GM10248 (cell line): ENCODE measurements at regions of chr4 and their contacts with region 1.

Region 1: GRCh38 chr4:56435306-56435926 is at the start of gene PPAT:
- DNase-seq: peak; percentile 97
- CTCF ChIP-seq: peak; percentile 9

Region 2: DNA sequence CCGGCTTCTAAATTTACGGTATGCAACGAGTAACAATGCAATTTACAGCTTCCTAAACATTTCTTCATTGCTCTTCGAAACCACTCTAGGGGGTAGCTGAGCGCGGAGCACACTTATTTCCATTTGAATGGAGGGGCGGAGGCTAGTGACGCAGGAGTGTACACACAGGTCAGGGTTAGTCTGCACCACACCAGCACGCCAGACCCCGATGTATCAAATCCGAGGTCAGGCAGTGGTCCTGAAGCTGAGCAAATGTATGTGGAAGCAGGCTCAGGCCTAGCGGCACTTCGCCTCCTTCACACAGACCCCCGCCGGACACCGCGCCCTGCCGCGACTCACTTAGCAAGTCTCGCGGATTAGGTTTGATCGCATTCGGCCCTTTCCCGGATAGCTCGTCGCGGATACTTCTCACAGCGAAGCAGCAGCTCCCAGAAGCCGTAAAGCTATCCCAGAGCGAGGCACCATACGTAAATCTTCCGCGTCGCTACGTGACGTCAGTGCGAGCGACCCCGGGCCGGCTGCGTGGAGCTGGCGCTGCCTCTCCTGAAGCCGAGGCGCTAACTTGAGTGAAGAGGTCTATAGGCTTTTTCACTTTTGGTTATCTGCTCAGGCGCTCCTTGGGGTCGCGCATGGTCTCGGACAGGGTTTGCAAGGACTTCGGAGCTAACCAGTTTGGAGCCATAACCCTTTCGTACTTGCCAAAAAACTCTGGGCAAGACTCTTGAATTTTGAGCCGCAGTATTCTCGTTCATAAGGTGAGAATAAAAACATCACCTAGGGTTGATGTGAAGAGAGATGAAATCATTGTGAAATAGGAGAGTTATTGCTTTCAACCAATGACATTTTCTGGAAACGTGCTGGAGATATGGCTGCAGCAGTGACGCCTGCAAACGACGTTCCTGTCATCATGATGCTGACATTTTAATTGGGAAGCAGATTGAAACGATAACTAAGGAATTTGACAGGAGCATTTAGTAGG is 48.1 kb before region 1 on chr4 and contains the start of gene AASDH:
- CTCF ChIA-PET with region 1: interaction called, 7 read pairs
- POLR2A ChIA-PET with region 1: interaction called, 22 read pairs
- DNase-seq: peak; percentile 91
- CTCF ChIP-seq: no peak

Region 3: GRCh38 chr4:56424697-56425514 is 10.5 kb before region 1 on chr4:
- CTCF ChIA-PET with region 1: interaction called, 64 read pairs
- POLR2A ChIA-PET with region 1: interaction called, 4 read pairs
- DNase-seq: peak; percentile 30
- CTCF ChIP-seq: peak; percentile 52

Region 4: GRCh38 chr4:56460085-56460484 is 24.7 kb after region 1 on chr4:
- CTCF ChIA-PET with region 1: interaction called, 15 read pairs
- POLR2A ChIA-PET with region 1: interaction called, 19 read pairs
- DNase-seq: no peak
- CTCF ChIP-seq: no peak

Region 5: GRCh38 chr4:56467284-56468096 is 32.1 kb after region 1 on chr4 and contains the start of gene SRP72:
- CTCF ChIA-PET with region 1: interaction called, 8 read pairs
- POLR2A ChIA-PET with region 1: interaction called, 19 read pairs
- DNase-seq: peak; percentile 92
- CTCF ChIP-seq: no peak

Region 6: GRCh38 chr4:56977321-56978012 is 542.1 kb after region 1 on chr4 and contains the start of gene NOA1:
- CTCF ChIA-PET with region 1: interaction called, 3 read pairs
- POLR2A ChIA-PET with region 1: interaction called, 10 read pairs
- DNase-seq: peak; percentile 94
- CTCF ChIP-seq: no peak